SK-N-SH (cell line): ENCODE measurements at regions of chr10 and their contacts with region 1.

Region 1: DNA sequence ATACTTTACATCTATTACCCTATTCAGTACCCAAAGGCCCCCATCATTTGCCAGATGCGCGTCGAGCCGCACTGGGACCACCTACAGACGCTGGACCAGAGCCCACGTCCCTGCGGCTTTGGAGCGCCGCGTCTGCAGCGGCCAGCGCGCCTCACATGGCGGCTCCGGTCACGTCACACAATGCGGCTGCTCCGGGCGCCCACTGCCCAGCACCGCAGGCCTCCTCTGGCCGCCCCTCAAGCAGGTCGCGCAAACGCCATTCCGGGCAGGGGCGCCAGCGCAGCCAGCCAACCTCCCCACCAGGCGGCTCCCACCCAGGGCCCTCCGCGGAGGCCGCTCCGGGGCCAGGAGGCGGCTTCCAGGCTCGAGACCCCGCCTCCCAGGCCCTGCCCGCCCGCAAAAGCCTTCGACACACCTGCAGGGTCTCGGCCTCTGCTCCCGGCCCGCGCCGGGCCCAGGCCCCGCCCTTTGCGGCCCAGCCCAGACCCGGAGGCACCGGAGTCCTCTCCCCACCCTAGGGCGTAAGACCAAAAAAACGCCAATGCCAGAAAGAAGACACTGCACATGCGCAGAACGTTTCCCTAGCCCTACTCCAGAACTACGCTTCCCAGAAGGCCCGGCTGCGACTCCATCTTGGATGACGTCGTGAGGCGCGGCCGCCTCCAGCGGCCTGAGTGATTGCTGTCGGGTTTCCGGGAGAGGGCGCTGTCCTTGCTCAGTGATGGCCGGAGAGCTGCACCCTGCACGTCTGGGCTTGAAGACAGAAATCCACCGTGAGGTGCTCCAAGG is at the start of gene ZNF25:
- DNase-seq: peak; percentile 93
- H3K4me3 ChIP-seq: peak within 1 kb of the TSS; percentile 76 to 90
- H3K27ac ChIP-seq: peak within 1 kb of the TSS; percentile 74 to 89
- H3K4me1 ChIP-seq: no peaks in the 10 kb centered on the region; a peak in 2 of 4 replicates
- H3K27me3 ChIP-seq: no peaks in the 10 kb centered on the region
- CTCF ChIP-seq: peak; percentile 85
- EP300 ChIP-seq: no peak
- RAD21 ChIP-seq: peak; percentile 74
- polyA plus RNA-seq, gene ZNF25: 3.6 and 5.6 TPM in 2 replicates

Region 2: GRCh38 chr10:38010119-38010903 is 34.0 kb after region 1 on chr10 and contains the start of gene ZNF33A:
- CTCF ChIA-PET with region 1: interaction called, 10 read pairs
- POLR2A ChIA-PET with region 1: interaction called, 7 read pairs
- DNase-seq: peak; percentile 83
- H3K4me3 ChIP-seq: peak within 1 kb of the TSS; percentile 58 to 72
- H3K27ac ChIP-seq: peak within 1 kb of the TSS; percentile 90 to 93
- H3K4me1 ChIP-seq: peaks cover 0 to 2% of the 10 kb centered on the region in 2 experiments; a peak in 1 of 4 replicates
- H3K27me3 ChIP-seq: no peaks in the 10 kb centered on the region
- CTCF ChIP-seq: no peak; the same call in 1 of the 2 replicates
- EP300 ChIP-seq: no peak
- RAD21 ChIP-seq: 0 out of 2 replicates have a peak, but pooled peaks have one; percentile 10
- polyA plus RNA-seq, gene ZNF33A: 5.7 and 7.5 TPM in 2 replicates